ENCODE measurements at regions of chr5 and their contacts with region 1.

Region 1: GRCh38 chr5:61044545-61044944 is 99.5 kb downstream of the NDUFAF2 start:
- DNase-seq: no peak
- H3K4me3 Mint-ChIP-seq: no peak overlapping the region
- H3K27ac Mint-ChIP-seq: no peak overlapping the region
- H3K4me1 Mint-ChIP-seq: no peaks in the 10 kb centered on the region
- H3K27me3 Mint-ChIP-seq: no peaks in the 10 kb centered on the region

Region 2: GRCh38 chr5:61000887-61001286 is 43.7 kb before region 1 on chr5:
- intact Hi-C with region 1: no loop called
- DNase-seq: no peak
- H3K4me3 Mint-ChIP-seq: no peak overlapping the region
- H3K27ac Mint-ChIP-seq: no peak overlapping the region
- H3K4me1 Mint-ChIP-seq: no peaks in the 10 kb centered on the region
- H3K27me3 Mint-ChIP-seq: no peaks in the 10 kb centered on the region

Region 3: DNA sequence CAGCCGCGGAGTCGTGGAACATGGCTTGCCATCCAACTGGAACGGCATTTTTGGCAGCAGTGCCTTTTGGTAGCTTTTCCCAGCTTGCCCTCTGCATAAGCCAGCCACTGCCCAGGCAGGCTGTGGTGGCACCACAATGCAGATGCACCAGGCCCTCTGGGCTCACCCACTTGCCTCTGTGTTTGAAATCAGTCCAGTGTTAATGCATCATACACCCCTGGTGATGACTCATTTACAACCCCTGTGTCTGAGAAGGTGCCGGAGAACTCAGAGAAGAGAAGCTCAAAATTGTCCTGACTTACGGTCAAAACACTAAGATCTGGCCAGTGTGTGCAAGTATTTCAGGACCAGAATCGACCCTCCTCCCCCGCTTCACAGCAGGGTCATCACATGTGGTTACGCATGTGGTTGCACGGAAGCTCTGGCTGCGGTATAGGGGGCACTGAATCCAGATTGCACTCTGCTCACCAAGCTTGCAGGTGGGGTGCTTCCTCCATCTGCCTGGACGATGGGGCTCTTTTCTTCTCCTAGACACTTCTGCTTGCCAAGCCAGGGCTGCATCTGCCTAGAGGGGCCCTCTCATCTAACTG is 184.2 kb after region 1 on chr5:
- intact Hi-C with region 1: no loop called
- DNase-seq: no peak
- H3K4me3 Mint-ChIP-seq: no peak overlapping the region
- H3K27ac Mint-ChIP-seq: no peak overlapping the region
- H3K4me1 Mint-ChIP-seq: no peaks in the 10 kb centered on the region
- H3K27me3 Mint-ChIP-seq: peaks cover 1% of the 10 kb centered on the region

Region 4: GRCh38 chr5:61285531-61285930 is 241.0 kb after region 1 on chr5:
- intact Hi-C with region 1: loop called (anchors 2 kb)
- DNase-seq: no peak
- H3K4me3 Mint-ChIP-seq: no peak overlapping the region
- H3K27ac Mint-ChIP-seq: no peak overlapping the region
- H3K4me1 Mint-ChIP-seq: no peaks in the 10 kb centered on the region
- H3K27me3 Mint-ChIP-seq: no peaks in the 10 kb centered on the region

Region 5: DNA sequence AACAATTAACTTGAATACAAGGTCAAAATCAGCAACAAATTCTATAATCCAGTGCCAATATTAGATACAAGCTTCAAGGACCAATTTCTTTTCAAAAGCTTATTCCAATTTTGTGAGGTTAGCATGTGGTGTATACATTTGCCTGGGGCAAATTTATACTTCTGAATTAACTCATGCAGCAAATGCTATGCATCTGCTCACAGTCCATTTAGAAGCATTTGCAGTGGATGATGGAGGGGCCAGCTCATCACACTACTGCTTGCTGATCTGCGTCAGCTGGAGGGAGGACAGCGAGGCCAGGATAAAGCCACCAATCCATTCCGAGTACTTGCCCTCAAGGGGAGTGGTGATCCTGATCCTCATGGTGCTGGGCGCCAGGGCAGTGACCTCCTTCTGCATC is 787.2 kb after region 1 on chr5:
- intact Hi-C with region 1: no loop called
- DNase-seq: no peak
- H3K4me3 Mint-ChIP-seq: no peak overlapping the region
- H3K27ac Mint-ChIP-seq: no peak overlapping the region
- H3K4me1 Mint-ChIP-seq: no peaks in the 10 kb centered on the region
- H3K27me3 Mint-ChIP-seq: no peaks in the 10 kb centered on the region